Right cardiac atrium (tissue), 5 donors: ENCODE measurements at regions of chr15 and their contacts with region 1.

Region 1: DNA sequence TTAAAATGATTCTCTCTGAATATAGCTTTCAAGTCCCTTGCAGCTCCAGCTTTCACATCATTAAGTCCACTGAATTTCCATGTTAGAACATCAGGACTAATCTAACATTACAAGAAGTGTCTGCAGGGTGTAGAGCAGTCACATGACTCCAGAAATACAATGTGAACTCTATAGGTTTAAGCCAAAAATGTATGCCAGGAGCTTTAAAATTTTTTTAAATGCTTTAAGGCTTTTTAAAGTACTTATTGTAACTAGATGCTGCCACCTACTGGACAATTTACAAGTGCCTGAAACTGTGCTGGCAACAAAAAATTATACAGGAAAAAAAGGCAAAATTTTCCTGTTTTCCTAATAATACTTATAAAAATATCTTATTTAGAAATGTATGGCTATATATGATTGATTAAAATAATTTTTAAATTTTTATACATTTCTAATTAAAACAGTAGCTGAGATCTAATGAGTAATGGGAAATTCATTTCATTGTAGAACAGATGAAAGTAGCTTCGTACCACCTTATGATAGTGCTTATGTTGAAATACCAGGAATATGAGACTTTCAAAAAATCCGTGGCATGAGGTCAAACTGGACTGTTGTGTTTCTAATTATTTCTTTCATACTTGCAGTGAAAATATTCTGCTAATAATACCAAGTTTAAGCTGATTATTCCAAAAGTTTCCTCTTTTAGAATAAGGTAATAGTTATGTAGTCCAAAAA is 25.7 kb downstream of the FSIP1 start:
- DNase-seq: no peak
- ATAC-seq: no peak
- H3K4me3 ChIP-seq: no peak overlapping the region
- H3K27ac ChIP-seq: no peak overlapping the region
- H3K4me1 ChIP-seq: no peaks in the 10 kb centered on the region
- H3K27me3 ChIP-seq: no peaks in the 10 kb centered on the region

Region 2: GRCh38 chr15:38699633-38700230 is 1057.2 kb before region 1 on chr15:
- intact Hi-C with region 1: loop called in 2 of 4 experiments (anchors 10 kb)
- DNase-seq: peak in 2 of 3 donors; percentile 52 to 83
- ATAC-seq: peak; percentile 23 to 62
- H3K4me3 ChIP-seq: no peak overlapping the region
- H3K27ac ChIP-seq: no peak overlapping the region
- H3K4me1 ChIP-seq: no peaks in the 10 kb centered on the region
- H3K27me3 ChIP-seq: no peaks in the 10 kb centered on the region

Region 3: DNA sequence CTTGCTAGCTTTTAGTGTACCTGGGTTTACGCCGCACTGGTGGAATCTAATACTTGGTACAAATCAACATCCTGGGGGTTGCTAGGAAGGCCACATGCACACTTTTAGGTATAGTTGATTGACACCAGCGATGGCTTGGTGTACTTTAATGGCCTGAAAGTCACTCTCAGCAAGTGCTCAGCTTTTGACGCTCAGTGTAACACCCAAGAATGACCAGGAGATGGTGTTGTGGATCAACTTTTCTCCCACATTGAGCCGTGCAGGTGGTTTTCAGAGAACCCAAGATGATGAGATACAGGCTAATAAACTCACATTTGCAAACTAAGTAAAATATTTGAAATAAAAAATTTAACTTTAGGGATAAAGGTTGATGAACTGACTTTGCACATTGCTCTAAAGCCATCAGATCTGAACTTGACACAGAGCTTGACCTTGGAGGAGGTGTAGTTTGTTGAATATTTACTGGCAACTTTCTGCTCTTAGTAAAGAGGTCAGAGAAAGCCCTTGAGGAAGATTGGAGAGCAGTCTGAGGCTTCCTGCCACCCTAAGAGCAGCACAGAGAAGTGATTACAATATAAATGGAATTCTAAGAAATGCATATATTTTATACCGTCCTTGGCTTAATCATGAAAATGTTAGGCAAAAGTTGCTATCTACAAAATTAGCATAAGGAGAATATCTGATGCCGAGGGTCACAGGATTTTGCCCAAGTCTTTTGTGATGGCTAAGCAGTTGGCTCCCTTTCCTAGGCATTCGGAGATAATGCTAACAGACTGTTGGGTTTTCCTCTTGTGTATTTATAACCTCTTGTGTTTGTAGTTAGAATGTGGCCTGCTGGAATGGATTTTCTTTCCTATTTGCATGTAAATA is 1048.9 kb before region 1 on chr15:
- intact Hi-C with region 1: loop called in 3 of 4 experiments (anchors 5 to 10 kb)
- DNase-seq: no peak
- ATAC-seq: peak; percentile 76 to 82
- H3K4me3 ChIP-seq: no peak overlapping the region
- H3K27ac ChIP-seq: no peak overlapping the region
- H3K4me1 ChIP-seq: no peaks in the 10 kb centered on the region
- H3K27me3 ChIP-seq: no peaks in the 10 kb centered on the region

Region 4: GRCh38 chr15:38817427-38818156 is 939.4 kb before region 1 on chr15:
- intact Hi-C with region 1: loop called in 2 of 4 experiments (anchors 10 kb)
- DNase-seq: peak; percentile 71 to 93 (median 90)
- ATAC-seq: peak; percentile 92
- H3K4me3 ChIP-seq: no peak overlapping the region
- H3K27ac ChIP-seq: no peak overlapping the region
- H3K4me1 ChIP-seq: no peaks in the 10 kb centered on the region
- H3K27me3 ChIP-seq: no peaks in the 10 kb centered on the region

Region 5: GRCh38 chr15:39177561-39177960 is 579.4 kb before region 1 on chr15:
- intact Hi-C with region 1: loop called in 1 of 4 experiments (anchors 5 kb)
- DNase-seq: no peak
- ATAC-seq: no peak
- H3K4me3 ChIP-seq: no peak overlapping the region
- H3K27ac ChIP-seq: no peak overlapping the region
- H3K4me1 ChIP-seq: peaks cover 2% of the 10 kb centered on the region
- H3K27me3 ChIP-seq: no peaks in the 10 kb centered on the region

Region 6: GRCh38 chr15:39686000-39686613 is 70.9 kb before region 1 on chr15:
- intact Hi-C with region 1: loop called (anchors 5 kb)
- DNase-seq: no peak
- ATAC-seq: peak; percentile 49 to 68
- H3K4me3 ChIP-seq: no peak overlapping the region
- H3K27ac ChIP-seq: no peak overlapping the region
- H3K4me1 ChIP-seq: peaks cover 3% of the 10 kb centered on the region
- H3K27me3 ChIP-seq: no peaks in the 10 kb centered on the region

Region 7: GRCh38 chr15:39801641-39802309 is 44.8 kb after region 1 on chr15:
- intact Hi-C with region 1: no loop called
- DNase-seq: no peak
- ATAC-seq: no peak
- H3K4me3 ChIP-seq: no peak overlapping the region
- H3K27ac ChIP-seq: no peak overlapping the region
- H3K4me1 ChIP-seq: no peaks in the 10 kb centered on the region
- H3K27me3 ChIP-seq: no peaks in the 10 kb centered on the region